Dorsolateral prefrontal cortex (tissue), 120 donors: ENCODE measurements at regions of chr13 and their contacts with region 1.

Region 1: DNA sequence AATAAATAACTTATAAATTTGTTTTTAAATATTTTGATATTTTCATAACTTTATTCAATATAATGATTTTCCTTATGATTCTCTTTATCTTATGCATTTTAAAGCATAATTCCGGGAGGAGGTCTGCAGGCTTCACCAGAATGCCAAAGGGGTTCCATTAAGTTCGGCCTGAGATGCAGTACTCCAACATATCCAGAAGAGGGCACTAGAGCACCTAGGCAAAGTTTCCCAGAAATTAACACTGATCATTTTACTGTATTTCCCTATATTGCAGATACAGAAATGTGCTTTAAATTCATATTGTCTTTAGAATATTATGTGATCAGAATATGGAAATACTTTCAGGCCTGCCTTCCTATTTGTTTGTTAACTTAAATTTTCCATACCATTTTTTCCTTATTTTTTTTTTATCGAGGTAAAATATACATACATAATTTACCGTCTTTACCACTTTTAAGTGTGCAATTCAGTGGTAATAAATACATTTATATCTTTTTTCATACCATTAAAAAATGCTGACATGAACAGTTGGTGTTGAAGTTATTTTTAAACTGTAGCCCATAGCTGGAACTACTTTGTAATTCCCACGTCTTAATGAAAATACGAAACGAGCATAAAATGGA is 58.9 kb upstream of the TM9SF2 start:
- DNase-seq: peak in 3 of 10 donors; percentile 29 to 51 (median 41)
- H3K4me3 ChIP-seq: no peak overlapping the region
- H3K27ac ChIP-seq: no peak overlapping the region
- H3K27me3 ChIP-seq: peaks cover 0 to 3% (median 0%) of the 10 kb centered on the region in 45 donors
- CTCF ChIP-seq: peak; percentile 86 to 99 (median 95)

Region 2: DNA sequence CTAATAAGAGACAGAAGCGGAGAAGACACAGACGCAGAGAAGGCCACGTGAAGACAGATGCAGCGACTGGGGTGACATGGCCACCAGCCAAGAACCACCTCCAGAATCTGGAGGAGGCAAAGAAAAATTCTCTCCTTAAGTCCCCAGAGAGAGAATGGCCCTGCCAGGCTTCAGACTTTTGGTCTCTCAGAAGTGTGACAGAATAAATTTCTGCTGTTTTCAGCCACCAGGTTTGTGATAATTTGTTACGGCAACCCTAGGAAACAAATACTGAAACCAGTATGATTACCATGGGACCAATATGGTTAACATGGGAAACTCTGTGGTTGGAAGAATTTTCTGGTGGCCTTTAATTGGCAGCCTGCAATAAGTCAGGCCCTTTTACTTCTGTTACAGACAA is 400.6 kb before region 1 on chr13:
- intact Hi-C with region 1: no loop called
- DNase-seq: peak in 1 of 10 donors; percentile 10
- H3K4me3 ChIP-seq: no peak overlapping the region
- H3K27ac ChIP-seq: no peak overlapping the region
- H3K27me3 ChIP-seq: no peaks in the 10 kb centered on the region
- CTCF ChIP-seq: no peak

Region 3: GRCh38 chr13:99501184-99501847 is 58.9 kb after region 1 on chr13 and contains the start of gene TM9SF2:
- intact Hi-C with region 1: loop called in 1 of 2 experiments (anchors 5 kb)
- DNase-seq: peak; percentile 86 to 95 (median 92)
- H3K4me3 ChIP-seq: peak within 1 kb of the TSS; percentile 61 to 99 (median 88)
- H3K27ac ChIP-seq: peak within 1 kb of the TSS in 57 of 59 donors; percentile 12 to 96 (median 79)
- H3K27me3 ChIP-seq: no peaks in the 10 kb centered on the region
- CTCF ChIP-seq: peak in 31 of 56 donors; percentile 6 to 60 (median 33)
- total RNA-seq, gene TM9SF2: 37.7 to 80.9 (median 64.8) TPM

Region 4: GRCh38 chr13:99606324-99607066 is 164.1 kb after region 1 on chr13:
- intact Hi-C with region 1: loop called in 1 of 2 experiments (anchors 5 kb)
- DNase-seq: peak; percentile 77 to 89 (median 84)
- H3K4me3 ChIP-seq: peak within 1 kb of the TSS; percentile 63 to 99 (median 86)
- H3K27ac ChIP-seq: peak within 1 kb of the TSS; percentile 28 to 93 (median 83)
- H3K27me3 ChIP-seq: no peaks in the 10 kb centered on the region
- CTCF ChIP-seq: peak in 31 of 56 donors; percentile 11 to 59 (median 36)

Region 5: GRCh38 chr13:100514788-100515409 is 1072.5 kb after region 1 on chr13:
- intact Hi-C with region 1: loop called in 1 of 2 experiments (anchors 5 kb)
- DNase-seq: peak; percentile 78 to 92 (median 87)
- H3K4me3 ChIP-seq: peak overlapping the region in 28 of 59 donors; percentile 2 to 51 (median 24)
- H3K27ac ChIP-seq: peak overlapping the region in 42 of 59 donors; percentile 1 to 86 (median 62)
- H3K27me3 ChIP-seq: no peaks in the 10 kb centered on the region
- CTCF ChIP-seq: peak; percentile 43 to 96 (median 90)